Natural killer cell (primary cell): ENCODE measurements at regions of chr14 and their contacts with region 1.

Region 1: GRCh38 chr14:65604936-65605335 is 192.4 kb downstream of the FUT8 start:
- DNase-seq: peak in 1 of 2 donors; percentile 6
- ATAC-seq: no peak
- H3K4me3 ChIP-seq: no peak overlapping the region
- H3K4me3 Mint-ChIP-seq: no peak overlapping the region
- H3K27ac ChIP-seq: no peak overlapping the region
- H3K27ac Mint-ChIP-seq: no peak overlapping the region
- H3K4me1 ChIP-seq: no peaks in the 10 kb centered on the region
- H3K4me1 Mint-ChIP-seq: peaks cover 0 to 5% of the 10 kb centered on the region in 2 donors
- H3K27me3 ChIP-seq: no peaks in the 10 kb centered on the region
- H3K27me3 Mint-ChIP-seq: no peaks in the 10 kb centered on the region
- CTCF ChIP-seq: no peak

Region 2: DNA sequence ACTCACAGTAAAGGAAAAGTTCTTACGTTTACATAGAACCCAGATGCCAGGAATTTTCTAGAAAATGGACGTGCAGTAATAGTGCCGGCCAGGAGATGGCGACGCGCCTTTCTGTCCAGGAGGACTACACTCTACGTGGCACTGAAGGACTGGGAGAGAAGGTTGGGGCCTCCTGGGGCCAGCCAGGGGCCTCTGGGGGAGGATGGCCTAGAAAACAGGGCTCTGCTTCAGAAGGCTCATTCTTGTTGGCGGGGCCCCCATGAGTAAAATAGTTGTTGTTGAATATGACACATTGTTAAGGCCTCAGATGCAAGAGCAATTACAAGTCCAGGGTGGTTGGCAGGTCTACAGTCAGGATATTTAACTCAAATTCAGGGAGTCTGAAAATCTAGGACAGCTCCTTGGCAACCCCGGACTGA is 382.5 kb before region 1 on chr14:
- intact Hi-C with region 1: loop called (anchors 10 kb)
- DNase-seq: peak; percentile 17 to 76
- ATAC-seq: peak; percentile 66 to 80 (median 75)
- H3K4me3 ChIP-seq: no peak overlapping the region
- H3K4me3 Mint-ChIP-seq: no peak overlapping the region
- H3K27ac ChIP-seq: no peak overlapping the region
- H3K27ac Mint-ChIP-seq: no peak overlapping the region
- H3K4me1 ChIP-seq: peaks cover 17% of the 10 kb centered on the region
- H3K4me1 Mint-ChIP-seq: no peaks in the 10 kb centered on the region
- H3K27me3 ChIP-seq: no peaks in the 10 kb centered on the region
- H3K27me3 Mint-ChIP-seq: no peaks in the 10 kb centered on the region
- CTCF ChIP-seq: peak; percentile 88

Region 3: GRCh38 chr14:65972891-65973290 is 368.0 kb after region 1 on chr14:
- intact Hi-C with region 1: no loop called
- DNase-seq: no peak
- ATAC-seq: no peak
- H3K4me3 ChIP-seq: no peak overlapping the region
- H3K4me3 Mint-ChIP-seq: no peak overlapping the region
- H3K27ac ChIP-seq: no peak overlapping the region
- H3K27ac Mint-ChIP-seq: no peak overlapping the region
- H3K4me1 ChIP-seq: no peaks in the 10 kb centered on the region
- H3K4me1 Mint-ChIP-seq: no peaks in the 10 kb centered on the region
- H3K27me3 ChIP-seq: no peaks in the 10 kb centered on the region
- H3K27me3 Mint-ChIP-seq: peaks cover 9 to 19% of the 10 kb centered on the region in 2 donors
- CTCF ChIP-seq: no peak